ENCODE measurements at regions of chr7 and their contacts with region 1.

Region 1: GRCh38 chr7:92691578-92691977 is 101.4 kb upstream of the FAM133B start:
- DNase-seq: peak; percentile 72
- H3K4me3 Mint-ChIP-seq: no peak overlapping the region
- H3K27ac Mint-ChIP-seq: no peak overlapping the region
- H3K4me1 Mint-ChIP-seq: peaks cover 22% of the 10 kb centered on the region
- H3K27me3 Mint-ChIP-seq: no peaks in the 10 kb centered on the region
- CTCF ChIP-seq: peak; percentile 56

Region 2: DNA sequence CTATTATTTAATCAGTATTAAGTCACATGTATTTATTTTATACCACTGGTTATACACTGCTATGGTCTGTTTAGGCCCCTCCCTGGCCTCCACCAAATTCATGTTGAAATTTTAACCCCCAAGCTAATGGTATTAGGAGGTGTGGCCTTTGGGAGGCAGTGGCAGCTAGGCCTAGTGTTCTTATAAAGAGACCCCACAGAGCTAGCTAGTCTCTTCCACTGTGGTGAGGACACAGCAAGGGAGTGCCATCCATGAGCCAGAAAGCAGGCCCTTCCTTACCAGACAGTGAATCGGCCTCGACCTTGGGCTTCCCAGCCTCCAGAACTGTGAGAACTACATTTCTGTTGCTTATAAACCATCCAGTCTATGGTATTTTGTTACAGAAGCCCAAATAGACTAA is 134.3 kb before region 1 on chr7:
- CTCF ChIA-PET with region 1: no interaction called
- POLR2A ChIA-PET with region 1: no interaction called
- intact Hi-C with region 1: no loop called
- DNase-seq: no peak
- H3K4me3 Mint-ChIP-seq: no peak overlapping the region
- H3K27ac Mint-ChIP-seq: no peak overlapping the region
- H3K4me1 Mint-ChIP-seq: no peaks in the 10 kb centered on the region
- H3K27me3 Mint-ChIP-seq: no peaks in the 10 kb centered on the region
- CTCF ChIP-seq: no peak

Region 3: DNA sequence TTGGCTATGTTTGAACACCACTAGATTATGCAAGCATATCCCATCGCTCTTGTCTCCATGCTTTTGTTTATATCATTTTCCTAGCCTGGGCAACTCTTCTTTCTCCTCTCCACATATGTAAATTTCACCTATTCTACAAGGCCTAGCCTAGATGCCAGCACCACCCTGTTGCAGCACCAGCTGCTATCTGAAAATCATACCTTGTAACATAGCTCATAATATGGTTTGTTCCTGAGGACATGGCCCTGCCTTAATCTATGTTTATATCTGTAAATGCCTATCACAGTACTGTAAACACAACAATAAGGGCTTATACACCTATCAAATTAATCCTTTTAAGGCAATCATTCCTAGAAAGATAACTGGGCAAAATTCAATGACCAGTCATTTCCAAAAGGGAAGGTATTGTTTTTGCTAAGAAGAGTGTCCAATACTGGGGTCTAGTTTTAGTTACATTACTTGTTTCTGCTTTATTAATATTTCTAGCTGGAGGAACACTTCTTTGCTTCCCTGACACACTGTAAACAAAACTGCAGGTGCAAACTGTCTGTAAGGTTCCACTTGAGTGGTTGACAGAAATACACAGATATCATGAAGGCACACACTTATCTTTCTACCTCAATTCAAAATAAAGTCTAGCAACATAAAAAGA is 17.3 kb before region 1 on chr7:
- CTCF ChIA-PET with region 1: no interaction called
- POLR2A ChIA-PET with region 1: no interaction called
- intact Hi-C with region 1: no loop called
- DNase-seq: no peak
- H3K4me3 Mint-ChIP-seq: no peak overlapping the region
- H3K27ac Mint-ChIP-seq: no peak overlapping the region
- H3K4me1 Mint-ChIP-seq: peaks cover 10% of the 10 kb centered on the region
- H3K27me3 Mint-ChIP-seq: no peaks in the 10 kb centered on the region
- CTCF ChIP-seq: no peak

Region 4: DNA sequence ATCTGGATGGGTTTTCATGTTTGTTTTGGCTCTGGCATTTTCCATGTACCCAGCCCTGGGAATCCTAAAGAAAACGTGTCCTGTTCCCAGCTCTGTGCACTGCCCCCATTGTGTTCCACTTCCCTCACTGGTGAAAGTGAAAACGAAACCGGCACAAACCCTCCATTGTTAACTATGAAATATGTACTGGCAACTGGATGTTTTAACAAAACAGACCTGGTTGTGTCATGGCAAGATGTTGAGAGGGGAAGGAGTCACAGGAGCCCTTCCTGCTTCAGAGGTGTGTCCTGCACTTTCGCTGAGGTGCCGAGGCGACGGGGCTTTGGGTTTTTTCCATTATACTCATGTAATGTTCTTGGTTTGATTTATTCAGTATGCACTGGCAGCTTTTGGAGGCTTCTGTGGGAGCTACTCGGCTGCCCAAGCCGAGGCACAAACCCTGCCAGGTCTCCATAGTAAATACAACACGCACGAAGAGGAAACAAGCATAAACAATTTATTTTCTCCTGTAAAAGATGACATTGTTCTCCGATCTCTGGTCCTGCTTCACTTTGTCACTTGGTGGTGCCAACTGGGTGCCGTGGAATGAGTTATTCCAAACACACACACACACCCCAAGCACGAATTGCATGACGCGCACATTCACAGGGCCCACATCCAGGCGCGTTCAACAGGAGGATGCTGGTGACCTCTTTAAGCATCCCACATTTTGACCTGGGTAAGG is 26.6 kb after region 1 on chr7:
- CTCF ChIA-PET with region 1: interaction called, 8 read pairs
- POLR2A ChIA-PET with region 1: interaction called, 10 read pairs
- intact Hi-C with region 1: no loop called
- DNase-seq: peak; percentile 83
- H3K4me3 Mint-ChIP-seq: peak overlapping the region; percentile 81
- H3K27ac Mint-ChIP-seq: peak overlapping the region; percentile 96
- H3K4me1 Mint-ChIP-seq: peaks cover 28% of the 10 kb centered on the region
- H3K27me3 Mint-ChIP-seq: no peaks in the 10 kb centered on the region
- CTCF ChIP-seq: no peak

Region 5: GRCh38 chr7:92778972-92779371 is 87.4 kb after region 1 on chr7:
- CTCF ChIA-PET with region 1: interaction called, 3 read pairs
- POLR2A ChIA-PET with region 1: interaction called, 4 read pairs
- intact Hi-C with region 1: loop called (anchors 2 kb)
- DNase-seq: peak; percentile 93
- H3K4me3 Mint-ChIP-seq: no peak overlapping the region
- H3K27ac Mint-ChIP-seq: peak overlapping the region; percentile 22
- H3K4me1 Mint-ChIP-seq: peaks cover 30% of the 10 kb centered on the region
- H3K27me3 Mint-ChIP-seq: no peaks in the 10 kb centered on the region
- CTCF ChIP-seq: no peak

Region 6: DNA sequence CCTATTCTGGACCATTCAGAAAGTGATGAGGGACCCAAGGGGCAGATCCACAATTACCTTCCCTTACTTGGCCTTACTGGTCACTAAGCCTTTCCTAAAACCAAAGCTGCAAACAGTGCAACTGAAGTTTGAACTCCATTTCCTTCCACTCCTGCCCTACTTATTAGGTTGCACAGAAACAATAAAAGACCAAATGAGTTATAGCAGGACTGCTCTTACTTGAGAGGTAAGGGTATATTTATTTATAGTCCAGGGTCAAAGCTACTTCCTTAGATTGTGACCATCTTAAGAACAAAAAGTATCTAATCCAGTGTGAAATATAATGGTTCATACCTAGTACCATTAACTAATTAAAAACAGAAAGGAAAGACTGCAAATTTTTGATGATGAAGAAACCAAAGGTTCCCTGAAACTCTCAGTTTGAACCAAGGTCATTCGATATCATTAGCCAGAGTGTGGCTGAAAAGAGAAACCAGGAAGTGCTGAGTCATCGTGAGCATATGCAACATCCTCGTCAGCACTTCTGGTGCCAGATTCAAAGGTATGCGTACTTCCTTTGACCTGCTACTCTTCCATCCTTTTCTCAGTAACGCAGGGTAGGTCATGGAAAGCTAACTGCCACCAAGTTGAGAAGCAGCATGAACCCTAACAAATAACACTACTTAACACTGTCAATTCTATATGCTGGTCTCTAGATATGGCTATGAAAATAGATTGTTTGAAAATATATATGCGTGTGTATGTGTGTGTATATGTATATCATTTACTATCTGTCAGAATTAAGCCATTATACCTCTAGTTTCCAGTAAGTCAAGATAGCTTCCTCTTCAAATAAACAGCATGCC is 118.0 kb after region 1 on chr7:
- CTCF ChIA-PET with region 1: interaction called, 4 read pairs
- POLR2A ChIA-PET with region 1: interaction called, 18 read pairs
- intact Hi-C with region 1: no loop called
- DNase-seq: peak; percentile 96
- H3K4me3 Mint-ChIP-seq: peak overlapping the region; percentile 35
- H3K27ac Mint-ChIP-seq: peak overlapping the region; percentile 82
- H3K4me1 Mint-ChIP-seq: peaks cover 48% of the 10 kb centered on the region
- H3K27me3 Mint-ChIP-seq: no peaks in the 10 kb centered on the region
- CTCF ChIP-seq: no peak

Region 7: GRCh38 chr7:92976931-92977330 is 285.4 kb after region 1 on chr7:
- CTCF ChIA-PET with region 1: no interaction called
- POLR2A ChIA-PET with region 1: no interaction called
- intact Hi-C with region 1: no loop called
- DNase-seq: no peak
- H3K4me3 Mint-ChIP-seq: no peak overlapping the region
- H3K27ac Mint-ChIP-seq: no peak overlapping the region
- H3K4me1 Mint-ChIP-seq: peaks cover 14% of the 10 kb centered on the region
- H3K27me3 Mint-ChIP-seq: no peaks in the 10 kb centered on the region
- CTCF ChIP-seq: no peak

Region 8: DNA sequence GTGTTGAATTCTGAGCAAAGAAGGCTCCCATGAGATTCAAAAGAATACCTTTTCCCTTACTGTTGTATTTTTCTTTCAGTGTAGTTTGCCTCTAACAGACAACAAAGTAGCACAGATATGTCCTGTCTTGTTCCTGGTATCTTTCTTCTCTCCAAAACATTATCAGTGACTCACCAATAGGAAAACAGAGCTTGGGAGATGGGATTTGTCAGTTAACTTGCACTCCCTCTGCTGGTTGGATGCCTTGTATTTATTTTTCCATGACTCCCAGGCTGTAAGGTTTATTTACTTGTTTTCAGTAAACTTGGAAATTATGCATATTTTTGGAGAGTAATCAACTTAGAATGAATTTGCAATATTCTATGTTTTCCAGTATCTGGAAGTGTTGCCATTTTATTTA is 296.5 kb after region 1 on chr7:
- CTCF ChIA-PET with region 1: interaction called, 3 read pairs
- POLR2A ChIA-PET with region 1: interaction called, 11 read pairs
- intact Hi-C with region 1: no loop called
- DNase-seq: peak; percentile 45
- H3K4me3 Mint-ChIP-seq: no peak overlapping the region
- H3K27ac Mint-ChIP-seq: peak overlapping the region; percentile 59
- H3K4me1 Mint-ChIP-seq: peaks cover 26% of the 10 kb centered on the region
- H3K27me3 Mint-ChIP-seq: no peaks in the 10 kb centered on the region
- CTCF ChIP-seq: peak; percentile 30

Region 9: GRCh38 chr7:93055543-93056107 is 364.0 kb after region 1 on chr7:
- CTCF ChIA-PET with region 1: interaction called, 3 read pairs
- POLR2A ChIA-PET with region 1: no interaction called
- intact Hi-C with region 1: loop called (anchors 1 kb)
- DNase-seq: peak; percentile 46
- H3K4me3 Mint-ChIP-seq: no peak overlapping the region
- H3K27ac Mint-ChIP-seq: no peak overlapping the region
- H3K4me1 Mint-ChIP-seq: peaks cover 7% of the 10 kb centered on the region
- H3K27me3 Mint-ChIP-seq: no peaks in the 10 kb centered on the region
- CTCF ChIP-seq: peak; percentile 73